ENCODE measurements at regions of chr2 and their contacts with region 1.

Region 1: GRCh38 chr2:84459018-84459943 is at the start of gene SUCLG1:
- DNase-seq: peak; percentile 87
- H3K4me3 ChIP-seq: peak within 1 kb of the TSS; percentile 76 to 89 (median 88)
- H3K27ac ChIP-seq: peak within 1 kb of the TSS; percentile 90
- H3K4me1 ChIP-seq: peaks cover 11% of the 10 kb centered on the region
- H3K27me3 ChIP-seq: no peaks in the 10 kb centered on the region
- CTCF ChIP-seq: no peak
- POLR2A ChIP-seq: peak; percentile 50
- total RNA-seq, gene SUCLG1: 59.2 and 62.6 TPM in 2 replicates

Region 2: GRCh38 chr2:84516234-84516986 is 57.1 kb after region 1 on chr2 and contains the start of gene DNAH6:
- CTCF ChIA-PET with region 1: interaction called, 4 read pairs
- POLR2A ChIA-PET with region 1: no interaction called
- dilution Hi-C with region 1: no loop called
- intact Hi-C with region 1: loop called (anchors 1 kb)
- DNase-seq: peak; percentile 92
- H3K4me3 ChIP-seq: peak within 1 kb of the TSS; percentile 13 to 53 (median 41)
- H3K27ac ChIP-seq: no peak within 1 kb of the TSS
- H3K4me1 ChIP-seq: peaks cover 7% of the 10 kb centered on the region
- H3K27me3 ChIP-seq: peaks cover 12 to 20% of the 10 kb centered on the region in 2 experiments
- CTCF ChIP-seq: no peak
- POLR2A ChIP-seq: no peak
- total RNA-seq, gene DNAH6: 0.24 and 0.25 TPM in 2 replicates

Region 3: GRCh38 chr2:84613082-84613481 is 153.8 kb after region 1 on chr2:
- CTCF ChIA-PET with region 1: no interaction called
- POLR2A ChIA-PET with region 1: no interaction called
- dilution Hi-C with region 1: no loop called
- intact Hi-C with region 1: no loop called
- DNase-seq: no peak
- H3K4me3 ChIP-seq: no peak overlapping the region
- H3K27ac ChIP-seq: no peak overlapping the region
- H3K4me1 ChIP-seq: no peaks in the 10 kb centered on the region
- H3K27me3 ChIP-seq: no peaks in the 10 kb centered on the region
- CTCF ChIP-seq: no peak
- POLR2A ChIP-seq: no peak

Region 4: DNA sequence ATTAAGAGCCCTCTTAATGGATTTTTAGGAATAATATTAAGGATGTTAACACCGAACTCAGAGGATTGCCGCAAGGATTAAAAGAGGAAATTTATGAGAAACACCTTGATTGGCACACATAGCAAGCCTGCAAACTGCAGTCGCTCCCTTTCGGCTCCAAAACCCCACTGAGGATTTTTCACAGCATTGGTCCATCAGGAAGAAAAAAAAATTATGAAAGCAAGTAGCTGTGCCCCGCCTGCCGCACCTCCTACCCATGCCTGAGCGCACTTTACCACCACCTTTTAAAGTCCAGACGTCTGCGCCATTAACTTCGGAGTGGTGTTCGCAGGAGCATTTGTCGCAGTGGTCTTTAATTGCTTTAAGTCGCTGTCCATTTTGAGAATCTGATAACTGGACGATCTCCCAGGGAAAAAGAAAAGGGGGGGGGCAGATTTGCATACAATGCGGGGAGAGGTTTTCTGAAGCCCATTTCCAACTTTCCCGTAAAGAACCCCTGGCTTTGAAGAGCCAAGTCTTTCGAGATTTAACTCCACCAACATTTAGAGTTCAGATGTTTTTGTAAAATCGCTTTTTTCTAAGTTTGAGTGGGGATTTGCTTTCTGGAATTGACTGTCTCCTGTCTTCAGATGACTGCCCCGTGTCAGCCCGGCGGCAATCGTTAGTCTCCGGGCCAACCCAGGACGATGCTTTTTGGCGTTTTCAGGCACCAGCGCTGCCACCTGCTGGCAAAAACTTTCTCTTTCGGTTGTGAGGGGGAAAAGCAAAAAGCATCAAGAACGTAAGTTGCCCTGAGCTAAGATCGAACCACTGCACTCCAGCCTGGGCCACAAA is 422.5 kb after region 1 on chr2:
- CTCF ChIA-PET with region 1: no interaction called
- POLR2A ChIA-PET with region 1: no interaction called
- dilution Hi-C with region 1: no loop called
- intact Hi-C with region 1: loop called (anchors 5 kb)
- DNase-seq: peak; percentile 82
- H3K4me3 ChIP-seq: peak overlapping the region; percentile 3 to 69 (median 15)
- H3K27ac ChIP-seq: no peak overlapping the region
- H3K4me1 ChIP-seq: peaks cover 16% of the 10 kb centered on the region
- H3K27me3 ChIP-seq: peaks cover 41% of the 10 kb centered on the region in 2 experiments
- CTCF ChIP-seq: peak; percentile 72 to 76
- POLR2A ChIP-seq: no peak